BJ (cell line): ENCODE measurements at regions of chr9 and their contacts with region 1.

Region 1: GRCh38 chr9:116860509-116861120 is 173.5 kb downstream of the TRIM32 start:
- DNase-seq: peak; percentile 4
- H3K4me3 ChIP-seq: no peak overlapping the region
- H3K27me3 ChIP-seq: no peaks in the 10 kb centered on the region
- CTCF ChIP-seq: peak; percentile 87

Region 2: GRCh38 chr9:116580853-116581252 is 279.8 kb before region 1 on chr9:
- CTCF ChIA-PET with region 1: no interaction called
- POLR2A ChIA-PET with region 1: no interaction called
- DNase-seq: no peak
- H3K4me3 ChIP-seq: no peak overlapping the region
- H3K27me3 ChIP-seq: no peaks in the 10 kb centered on the region
- CTCF ChIP-seq: no peak

Region 3: GRCh38 chr9:116849721-116850120 is 10.9 kb before region 1 on chr9:
- CTCF ChIA-PET with region 1: interaction called, 26 read pairs
- POLR2A ChIA-PET with region 1: interaction called, 4 read pairs
- DNase-seq: no peak
- H3K4me3 ChIP-seq: no peak overlapping the region
- H3K27me3 ChIP-seq: no peaks in the 10 kb centered on the region; the same call in 1 of the 2 replicates
- CTCF ChIP-seq: no peak

Region 4: GRCh38 chr9:116891424-116891823 is 30.8 kb after region 1 on chr9:
- CTCF ChIA-PET with region 1: interaction called, 16 read pairs
- POLR2A ChIA-PET with region 1: no interaction called
- DNase-seq: no peak
- H3K4me3 ChIP-seq: no peak overlapping the region
- H3K27me3 ChIP-seq: no peaks in the 10 kb centered on the region
- CTCF ChIP-seq: no peak